ENCODE measurements at regions of chr21 and their contacts with region 1.

Region 1: GRCh38 chr21:29232601-29233546 is 65.8 kb upstream of the BACH1 start:
- DNase-seq: no peak
- ATAC-seq: peak; percentile 42
- H3K4me3 ChIP-seq: 0 out of 2 replicates have a peak overlapping the region, but pooled peaks have one; percentile 2
- H3K27ac ChIP-seq: peak overlapping the region; percentile 87
- H3K4me1 ChIP-seq: peaks cover 69% of the 10 kb centered on the region
- H3K27me3 ChIP-seq: no peaks in the 10 kb centered on the region
- CTCF ChIP-seq: peak; percentile 16 to 43 (median 30); a peak in 3 of 6 replicates
- EP300 ChIP-seq: no peak
- POLR2A ChIP-seq: no peak
- RAD21 ChIP-seq: peak; percentile 68

Region 2: DNA sequence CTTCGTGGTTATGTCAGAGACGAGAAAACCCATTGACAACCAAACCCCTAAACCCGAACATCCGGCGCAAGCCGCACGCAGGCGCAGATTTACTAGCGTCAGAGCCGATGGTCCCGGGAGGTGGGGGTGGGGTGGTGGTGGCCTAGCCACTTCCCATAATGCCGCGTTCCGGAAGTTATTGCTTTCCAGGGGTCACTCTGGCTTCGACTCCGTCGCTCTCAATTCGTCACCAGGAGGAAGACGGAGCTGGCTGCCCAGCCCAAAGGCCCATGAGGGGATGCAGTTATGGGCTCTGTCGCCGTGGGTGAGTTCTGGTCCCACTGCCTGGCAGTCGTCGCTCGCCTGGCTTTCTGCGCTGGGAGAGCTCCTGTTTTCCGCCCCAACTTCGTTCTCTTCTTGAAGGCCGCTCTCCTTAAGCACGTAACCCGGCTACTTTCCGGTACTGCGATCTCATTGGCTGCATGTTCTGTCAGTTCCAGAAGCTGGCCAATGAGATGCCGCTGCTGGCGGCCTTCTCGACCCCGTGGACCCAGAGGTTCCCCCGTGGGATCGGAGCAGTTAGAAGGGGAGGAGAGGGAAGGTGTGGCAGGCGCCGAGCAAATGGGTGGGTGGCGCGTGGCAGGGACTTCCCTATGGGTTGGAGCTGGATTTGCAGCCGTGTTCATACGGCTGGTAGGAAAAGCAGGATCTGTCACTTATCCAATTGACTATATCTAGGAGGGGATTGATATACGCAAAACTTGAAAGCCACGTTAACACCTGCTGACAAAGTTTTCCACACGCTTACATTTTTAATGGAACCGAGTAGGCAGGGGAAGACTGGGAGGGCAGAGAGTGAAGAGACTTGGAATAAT is 208.2 kb before region 1 on chr21 and contains the start of gene USP16:
- CTCF ChIA-PET with region 1: no interaction called
- POLR2A ChIA-PET with region 1: no interaction called
- RAD21 ChIA-PET with region 1: no interaction called
- SMC1A ChIA-PET with region 1: no interaction called
- in situ Hi-C with region 1: no loop called
- intact Hi-C with region 1: no loop called
- DNase-seq: peak; percentile 99
- ATAC-seq: peak; percentile 98
- H3K4me3 ChIP-seq: peak within 1 kb of the TSS; percentile 89
- H3K27ac ChIP-seq: peak within 1 kb of the TSS; percentile 99
- H3K4me1 ChIP-seq: peaks cover 4% of the 10 kb centered on the region; the same call in 1 of the 2 replicates
- H3K27me3 ChIP-seq: no peaks in the 10 kb centered on the region
- CTCF ChIP-seq: no peak
- EP300 ChIP-seq: peak in 1 of 2 experiments; percentile 21; a peak in 1 of 4 replicates
- POLR2A ChIP-seq: peak; percentile 95
- RAD21 ChIP-seq: no peak
- polyA plus RNA-seq, gene USP16: 52.6 to 68.7 TPM

Region 3: GRCh38 chr21:29078869-29079767 is 153.8 kb before region 1 on chr21:
- CTCF ChIA-PET with region 1: no interaction called
- POLR2A ChIA-PET with region 1: interaction called, 4 read pairs
- RAD21 ChIA-PET with region 1: interaction called, 7 read pairs
- SMC1A ChIA-PET with region 1: interaction called, 9 read pairs
- in situ Hi-C with region 1: no loop called
- intact Hi-C with region 1: loop called (anchors 2 kb)
- DNase-seq: peak; percentile 68
- ATAC-seq: peak; percentile 69
- H3K4me3 ChIP-seq: peak overlapping the region; percentile 41; the same call in 1 of the 2 replicates
- H3K27ac ChIP-seq: peak overlapping the region; percentile 60
- H3K4me1 ChIP-seq: peaks cover 16% of the 10 kb centered on the region
- H3K27me3 ChIP-seq: no peaks in the 10 kb centered on the region
- CTCF ChIP-seq: no peak
- EP300 ChIP-seq: 0 out of 4 replicates have a peak, but pooled peaks of 1 of the 2 experiments have one; percentile 34
- POLR2A ChIP-seq: no peak
- RAD21 ChIP-seq: no peak

Region 4: GRCh38 chr21:29125191-29125590 is 107.7 kb before region 1 on chr21:
- CTCF ChIA-PET with region 1: interaction called, 8 read pairs
- POLR2A ChIA-PET with region 1: interaction called, 3 read pairs
- RAD21 ChIA-PET with region 1: interaction called, 21 read pairs
- SMC1A ChIA-PET with region 1: interaction called, 25 read pairs
- in situ Hi-C with region 1: no loop called
- intact Hi-C with region 1: loop called (anchors 5 kb)
- DNase-seq: peak; percentile 71
- ATAC-seq: peak; percentile 94
- H3K4me3 ChIP-seq: peak overlapping the region; percentile 43
- H3K27ac ChIP-seq: peak overlapping the region; percentile 80
- H3K4me1 ChIP-seq: peaks cover 28% of the 10 kb centered on the region
- H3K27me3 ChIP-seq: no peaks in the 10 kb centered on the region
- CTCF ChIP-seq: peak in 2 of 3 experiments; percentile 16 to 26; a peak in 2 of 6 replicates
- EP300 ChIP-seq: peak in 1 of 2 experiments; percentile 43; a peak in 1 of 4 replicates
- POLR2A ChIP-seq: no peak
- RAD21 ChIP-seq: peak; percentile 32; the same call in 1 of the 2 replicates

Region 5: GRCh38 chr21:29208682-29209059 is 24.2 kb before region 1 on chr21:
- CTCF ChIA-PET with region 1: interaction called, 4 read pairs
- POLR2A ChIA-PET with region 1: interaction called, 9 read pairs
- RAD21 ChIA-PET with region 1: interaction called, 14 read pairs
- SMC1A ChIA-PET with region 1: interaction called, 24 read pairs
- in situ Hi-C with region 1: no loop called
- intact Hi-C with region 1: no loop called
- DNase-seq: no peak
- ATAC-seq: peak; percentile 57
- H3K4me3 ChIP-seq: no peak overlapping the region
- H3K27ac ChIP-seq: peak overlapping the region; percentile 31; the same call in 1 of the 2 replicates
- H3K4me1 ChIP-seq: peaks cover 10% of the 10 kb centered on the region
- H3K27me3 ChIP-seq: no peaks in the 10 kb centered on the region
- CTCF ChIP-seq: no peak
- EP300 ChIP-seq: peak; percentile 38 to 40; a peak in 1 of 4 replicates
- POLR2A ChIP-seq: no peak
- RAD21 ChIP-seq: no peak

Region 6: GRCh38 chr21:29245104-29245643 is 12.3 kb after region 1 on chr21:
- CTCF ChIA-PET with region 1: interaction called, 22 read pairs
- POLR2A ChIA-PET with region 1: interaction called, 14 read pairs
- RAD21 ChIA-PET with region 1: interaction called, 17 read pairs
- SMC1A ChIA-PET with region 1: interaction called, 94 read pairs
- in situ Hi-C with region 1: no loop called
- intact Hi-C with region 1: no loop called
- DNase-seq: no peak
- ATAC-seq: peak; percentile 84
- H3K4me3 ChIP-seq: no peak overlapping the region
- H3K27ac ChIP-seq: peak overlapping the region; percentile 49
- H3K4me1 ChIP-seq: peaks cover 11% of the 10 kb centered on the region
- H3K27me3 ChIP-seq: no peaks in the 10 kb centered on the region
- CTCF ChIP-seq: no peak
- EP300 ChIP-seq: peak in 1 of 2 experiments; percentile 37; a peak in 1 of 4 replicates
- POLR2A ChIP-seq: no peak
- RAD21 ChIP-seq: no peak

Region 7: GRCh38 chr21:29351691-29352090 is 118.8 kb after region 1 on chr21:
- CTCF ChIA-PET with region 1: interaction called, 14 read pairs
- POLR2A ChIA-PET with region 1: no interaction called
- RAD21 ChIA-PET with region 1: interaction called, 7 read pairs
- SMC1A ChIA-PET with region 1: interaction called, 10 read pairs
- in situ Hi-C with region 1: no loop called
- intact Hi-C with region 1: loop called (anchors 1 kb)
- DNase-seq: no peak
- ATAC-seq: no peak
- H3K4me3 ChIP-seq: no peak overlapping the region
- H3K27ac ChIP-seq: no peak overlapping the region
- H3K4me1 ChIP-seq: peaks cover 16% of the 10 kb centered on the region
- H3K27me3 ChIP-seq: no peaks in the 10 kb centered on the region
- CTCF ChIP-seq: no peak
- EP300 ChIP-seq: no peak
- POLR2A ChIP-seq: no peak
- RAD21 ChIP-seq: no peak

Region 8: DNA sequence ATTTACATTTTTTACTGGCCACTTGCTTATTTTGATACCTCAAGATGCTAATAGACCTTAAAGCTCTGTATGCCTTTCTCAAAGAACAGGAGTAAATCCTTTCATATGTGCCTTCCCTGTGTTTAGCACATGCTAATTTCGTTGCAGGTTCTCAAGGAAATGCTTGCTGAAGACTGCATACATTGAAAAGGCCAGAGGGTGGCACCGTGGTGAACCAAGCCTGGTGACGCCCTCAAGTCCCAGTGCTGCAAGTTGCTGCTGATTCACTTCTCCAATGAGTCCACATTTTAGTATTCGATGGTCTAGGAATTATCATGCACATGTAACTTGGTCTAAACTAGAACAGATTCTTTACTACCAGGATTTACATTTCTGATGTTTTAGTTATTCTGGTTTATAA is 839.6 kb after region 1 on chr21:
- CTCF ChIA-PET with region 1: no interaction called
- POLR2A ChIA-PET with region 1: no interaction called
- RAD21 ChIA-PET with region 1: no interaction called
- SMC1A ChIA-PET with region 1: no interaction called
- in situ Hi-C with region 1: no loop called
- intact Hi-C with region 1: no loop called
- DNase-seq: no peak
- ATAC-seq: 0 out of 3 replicates have a peak, but pooled peaks have one; percentile 31
- H3K4me3 ChIP-seq: no peak overlapping the region
- H3K27ac ChIP-seq: no peak overlapping the region
- H3K4me1 ChIP-seq: no peaks in the 10 kb centered on the region
- H3K27me3 ChIP-seq: no peaks in the 10 kb centered on the region
- CTCF ChIP-seq: no peak; a peak in 1 of 6 replicates
- EP300 ChIP-seq: no peak
- POLR2A ChIP-seq: no peak
- RAD21 ChIP-seq: no peak

Measured in GM12878 (cell line).